Activated T-helper 1 cell treated with anti-CD3 and anti-CD28 coated beads, Interleukin-12 subunit alpha, Interleukin-12 subunit beta, Interleukin-2, Interleukin-4 antibody, amounts not matched to agents 30 ng/mL and 10 ng/mL and 1 ng/mL, durations not matched to agents 14 hours and 24 hours and 36 hours (primary cell): ENCODE measurements at regions of chr2 and their contacts with region 1.

Region 1: GRCh38 chr2:71309-72035 is 25.2 kb upstream of the FAM110C start:
- DNase-seq: no peak
- H3K4me3 Mint-ChIP-seq: no peak overlapping the region
- H3K27ac Mint-ChIP-seq: no peak overlapping the region
- H3K4me1 Mint-ChIP-seq: no peaks in the 10 kb centered on the region
- H3K27me3 Mint-ChIP-seq: peaks cover 7% of the 10 kb centered on the region

Region 2: GRCh38 chr2:124241-124880 is 52.9 kb after region 1 on chr2:
- intact Hi-C with region 1: loop called (anchors 1 kb)
- DNase-seq: no peak
- H3K4me3 Mint-ChIP-seq: no peak overlapping the region
- H3K27ac Mint-ChIP-seq: no peak overlapping the region
- H3K4me1 Mint-ChIP-seq: no peaks in the 10 kb centered on the region
- H3K27me3 Mint-ChIP-seq: peaks cover 3% of the 10 kb centered on the region